Naive thymus-derived CD4-positive, alpha-beta T cell (primary cell): ENCODE measurements at regions of chr1 and their contacts with region 1.

Region 1: GRCh38 chr1:156500797-156501499 is 373 bp upstream of the MEF2D start:
- DNase-seq: peak; percentile 91 to 97 (median 93)
- ATAC-seq: peak; percentile 83
- H3K4me3 ChIP-seq: peak overlapping the region; percentile 81
- H3K4me3 Mint-ChIP-seq: peak overlapping the region; percentile 88 to 97 (median 92)
- H3K27ac ChIP-seq: peak overlapping the region; percentile 99
- H3K27ac Mint-ChIP-seq: peak overlapping the region; percentile 93 to 100 (median 99)
- H3K4me1 ChIP-seq: peaks cover 70 to 71% of the 10 kb centered on the region in 2 donors
- H3K4me1 Mint-ChIP-seq: peaks cover 55 to 75% (median 71%) of the 10 kb centered on the region in 7 donors
- H3K27me3 ChIP-seq: no peaks in the 10 kb centered on the region
- H3K27me3 Mint-ChIP-seq: no peaks in the 10 kb centered on the region

Region 2: DNA sequence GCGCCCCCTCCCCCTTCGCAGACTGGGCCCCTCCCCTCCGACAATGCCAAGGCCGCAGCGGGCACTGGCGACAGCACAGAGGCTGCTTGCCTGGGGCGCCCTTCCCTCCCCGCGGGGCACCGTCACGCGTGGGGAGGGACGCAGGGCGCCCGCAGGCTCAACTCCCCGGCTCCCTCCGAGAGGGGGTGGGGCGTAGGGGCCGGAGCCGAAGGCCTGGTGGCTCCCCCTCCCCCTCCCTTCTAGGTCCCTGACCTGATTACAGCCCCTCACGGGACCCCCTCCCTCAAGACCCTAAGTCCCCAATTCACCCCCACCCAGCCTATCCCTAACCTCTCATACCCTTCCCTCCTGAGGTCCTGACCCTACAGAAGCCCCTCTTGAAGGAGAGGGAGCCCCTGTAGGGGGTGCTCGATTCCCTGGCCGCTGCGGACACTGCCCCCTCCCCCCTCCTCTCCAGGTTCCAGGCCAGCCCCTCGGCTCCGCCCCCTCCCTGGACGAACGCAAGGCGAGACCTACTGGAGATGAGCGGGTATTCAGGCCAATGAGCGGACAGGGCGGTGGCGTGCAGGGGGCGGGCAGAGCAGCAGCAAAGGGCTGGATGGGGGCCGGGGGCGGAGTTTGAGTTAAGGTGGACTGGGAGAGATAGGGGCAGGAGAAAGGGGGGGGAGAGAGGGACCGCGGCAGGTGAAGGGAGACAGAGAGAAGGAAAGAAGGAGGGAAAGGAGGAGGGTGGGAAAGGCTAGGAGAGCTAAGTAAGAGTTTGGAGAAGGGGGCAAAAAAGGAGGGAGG is 1499.1 kb before region 1 on chr1:
- CTCF ChIA-PET with region 1: no interaction called
- POLR2A ChIA-PET with region 1: no interaction called
- intact Hi-C with region 1: loop called in 1 of 2 experiments (anchors 10 kb)
- DNase-seq: peak; percentile 90 to 98 (median 95)
- ATAC-seq: peak; percentile 87
- H3K4me3 ChIP-seq: peak overlapping the region; percentile 95
- H3K4me3 Mint-ChIP-seq: peak overlapping the region; percentile 90 to 100 (median 95)
- H3K27ac ChIP-seq: peak overlapping the region; percentile 88
- H3K27ac Mint-ChIP-seq: peak overlapping the region; percentile 70 to 99 (median 91)
- H3K4me1 ChIP-seq: peaks cover 23 to 40% of the 10 kb centered on the region in 2 donors
- H3K4me1 Mint-ChIP-seq: peaks cover 29 to 63% (median 55%) of the 10 kb centered on the region in 7 donors
- H3K27me3 ChIP-seq: no peaks in the 10 kb centered on the region
- H3K27me3 Mint-ChIP-seq: no peaks in the 10 kb centered on the region

Region 3: GRCh38 chr1:156383023-156383422 is 117.9 kb before region 1 on chr1:
- CTCF ChIA-PET with region 1: interaction called, 4 read pairs
- POLR2A ChIA-PET with region 1: no interaction called
- intact Hi-C with region 1: loop called in 1 of 2 experiments (anchors 5 kb)
- DNase-seq: peak; percentile 9 to 57 (median 46)
- ATAC-seq: peak; percentile 90
- H3K4me3 ChIP-seq: no peak overlapping the region
- H3K4me3 Mint-ChIP-seq: no peak overlapping the region
- H3K27ac ChIP-seq: no peak overlapping the region
- H3K27ac Mint-ChIP-seq: no peak overlapping the region
- H3K4me1 ChIP-seq: peaks cover 6 to 8% of the 10 kb centered on the region in 2 donors
- H3K4me1 Mint-ChIP-seq: peaks cover 5 to 7% (median 6%) of the 10 kb centered on the region in 7 donors
- H3K27me3 ChIP-seq: peaks cover 0 to 3% of the 10 kb centered on the region in 2 donors
- H3K27me3 Mint-ChIP-seq: peaks cover 0 to 23% (median 12%) of the 10 kb centered on the region in 5 donors

Region 4: GRCh38 chr1:156524481-156524869 is 23.5 kb after region 1 on chr1:
- CTCF ChIA-PET with region 1: interaction called, 5 read pairs
- POLR2A ChIA-PET with region 1: interaction called, 32 read pairs
- intact Hi-C with region 1: no loop called
- DNase-seq: peak in 1 of 9 donors; percentile 14
- ATAC-seq: peak; percentile 71
- H3K4me3 ChIP-seq: no peak overlapping the region
- H3K4me3 Mint-ChIP-seq: peak overlapping the region in 9 of 10 donors; percentile 27 to 71 (median 58)
- H3K27ac ChIP-seq: no peak overlapping the region
- H3K27ac Mint-ChIP-seq: peak overlapping the region; percentile 4 to 86 (median 57)
- H3K4me1 ChIP-seq: peaks cover 23 to 31% of the 10 kb centered on the region in 2 donors
- H3K4me1 Mint-ChIP-seq: peaks cover 34 to 43% (median 36%) of the 10 kb centered on the region in 7 donors
- H3K27me3 ChIP-seq: no peaks in the 10 kb centered on the region
- H3K27me3 Mint-ChIP-seq: no peaks in the 10 kb centered on the region

Region 5: DNA sequence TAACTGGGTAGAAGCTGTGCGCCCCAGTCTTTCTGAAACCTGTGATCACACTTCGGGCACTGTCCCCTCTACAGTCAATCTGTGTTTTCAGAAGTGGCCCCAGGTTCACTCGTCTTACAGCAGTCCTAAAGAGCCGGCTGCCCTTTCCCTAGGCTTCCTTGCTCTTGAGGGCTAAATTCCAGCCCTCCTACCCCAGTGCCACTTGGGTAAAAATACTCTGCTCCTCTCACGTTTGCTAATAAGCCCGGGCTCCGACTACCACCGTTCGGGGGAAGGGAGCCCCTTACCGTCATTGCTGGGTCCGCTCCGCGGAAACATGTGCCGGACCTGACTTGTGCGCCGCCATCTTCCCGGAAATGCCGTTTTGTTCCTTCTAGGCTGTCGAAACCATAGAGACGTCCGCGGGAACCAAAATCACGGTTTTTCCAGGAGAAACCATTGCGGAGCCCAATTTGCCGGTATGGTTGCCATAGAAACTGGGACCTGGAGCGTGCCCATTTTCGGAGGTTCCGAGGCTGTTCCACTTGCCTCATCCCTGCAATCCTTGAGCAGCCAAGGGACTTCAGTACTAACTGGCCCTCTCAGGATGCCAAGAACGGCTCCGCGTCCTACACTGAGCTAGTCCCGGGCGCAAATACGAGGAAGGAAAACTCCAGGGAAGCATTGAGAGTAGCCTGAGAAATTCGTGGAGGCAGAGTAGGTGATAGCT is 100.3 kb after region 1 on chr1 and contains the start of gene GPATCH4:
- CTCF ChIA-PET with region 1: interaction called, 4 read pairs
- POLR2A ChIA-PET with region 1: interaction called, 8 read pairs
- intact Hi-C with region 1: loop called (anchors 1 to 2 kb)
- DNase-seq: peak; percentile 49 to 79 (median 74)
- ATAC-seq: peak; percentile 88
- H3K4me3 ChIP-seq: peak within 1 kb of the TSS; percentile 68
- H3K4me3 Mint-ChIP-seq: peak within 1 kb of the TSS; percentile 90 to 100 (median 93)
- H3K27ac ChIP-seq: peak within 1 kb of the TSS; percentile 86
- H3K27ac Mint-ChIP-seq: peak within 1 kb of the TSS; percentile 92 to 99 (median 94)
- H3K4me1 ChIP-seq: peaks cover 9 to 19% of the 10 kb centered on the region in 2 donors
- H3K4me1 Mint-ChIP-seq: peaks cover 24 to 41% (median 36%) of the 10 kb centered on the region in 7 donors
- H3K27me3 ChIP-seq: no peaks in the 10 kb centered on the region
- H3K27me3 Mint-ChIP-seq: no peaks in the 10 kb centered on the region
- total RNA-seq, gene GPATCH4: 33.3 to 49.6 (median 39.1) TPM

Region 6: GRCh38 chr1:156751758-156752757 is 251.1 kb after region 1 on chr1:
- CTCF ChIA-PET with region 1: no interaction called
- POLR2A ChIA-PET with region 1: no interaction called
- intact Hi-C with region 1: loop called (anchors 1 to 2 kb)
- DNase-seq: peak; percentile 83 to 98 (median 92)
- ATAC-seq: peak; percentile 96
- H3K4me3 ChIP-seq: peak overlapping the region; percentile 93
- H3K4me3 Mint-ChIP-seq: peak overlapping the region; percentile 88 to 98 (median 92)
- H3K27ac ChIP-seq: peak overlapping the region; percentile 90
- H3K27ac Mint-ChIP-seq: peak overlapping the region; percentile 82 to 96 (median 90)
- H3K4me1 ChIP-seq: peaks cover 36 to 38% of the 10 kb centered on the region in 2 donors
- H3K4me1 Mint-ChIP-seq: peaks cover 38 to 57% (median 45%) of the 10 kb centered on the region in 7 donors
- H3K27me3 ChIP-seq: no peaks in the 10 kb centered on the region
- H3K27me3 Mint-ChIP-seq: no peaks in the 10 kb centered on the region